ENCODE measurements at regions of chr1 and their contacts with region 1.

Region 1: DNA sequence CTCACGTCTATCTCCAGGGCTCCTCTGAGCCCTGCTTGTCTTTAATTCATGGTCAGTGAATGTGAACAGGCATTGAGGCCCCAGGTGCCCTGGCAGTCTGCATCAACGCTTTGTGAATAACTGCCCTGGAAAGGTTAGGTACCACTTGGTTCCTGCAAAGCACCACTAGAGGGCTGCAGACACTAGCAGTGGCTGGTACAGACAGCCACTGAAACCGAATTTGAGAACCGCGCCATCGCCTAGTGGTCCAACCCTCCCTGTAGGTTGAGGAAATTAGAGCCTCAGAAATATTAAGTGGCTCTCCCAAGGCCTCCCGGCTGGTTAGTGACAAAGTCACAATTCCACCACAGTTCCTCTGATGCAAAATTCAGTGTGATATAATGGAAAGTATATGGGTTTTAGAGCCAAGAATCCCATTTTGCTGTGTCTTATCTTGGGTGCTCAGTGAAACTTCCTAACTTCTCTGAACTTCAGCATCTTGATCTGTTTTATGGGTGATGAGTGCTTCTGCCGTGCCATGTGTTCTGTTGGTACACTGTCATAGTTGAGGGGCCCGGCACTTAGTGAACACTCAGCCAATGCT is 46.2 kb upstream of the BCL9 start:
- DNase-seq: peak; percentile 43
- H3K4me3 ChIP-seq: no peak overlapping the region
- H3K27ac ChIP-seq: no peak overlapping the region
- H3K27me3 ChIP-seq: peaks cover 7% of the 10 kb centered on the region
- CTCF ChIP-seq: peak; percentile 99

Region 2: DNA sequence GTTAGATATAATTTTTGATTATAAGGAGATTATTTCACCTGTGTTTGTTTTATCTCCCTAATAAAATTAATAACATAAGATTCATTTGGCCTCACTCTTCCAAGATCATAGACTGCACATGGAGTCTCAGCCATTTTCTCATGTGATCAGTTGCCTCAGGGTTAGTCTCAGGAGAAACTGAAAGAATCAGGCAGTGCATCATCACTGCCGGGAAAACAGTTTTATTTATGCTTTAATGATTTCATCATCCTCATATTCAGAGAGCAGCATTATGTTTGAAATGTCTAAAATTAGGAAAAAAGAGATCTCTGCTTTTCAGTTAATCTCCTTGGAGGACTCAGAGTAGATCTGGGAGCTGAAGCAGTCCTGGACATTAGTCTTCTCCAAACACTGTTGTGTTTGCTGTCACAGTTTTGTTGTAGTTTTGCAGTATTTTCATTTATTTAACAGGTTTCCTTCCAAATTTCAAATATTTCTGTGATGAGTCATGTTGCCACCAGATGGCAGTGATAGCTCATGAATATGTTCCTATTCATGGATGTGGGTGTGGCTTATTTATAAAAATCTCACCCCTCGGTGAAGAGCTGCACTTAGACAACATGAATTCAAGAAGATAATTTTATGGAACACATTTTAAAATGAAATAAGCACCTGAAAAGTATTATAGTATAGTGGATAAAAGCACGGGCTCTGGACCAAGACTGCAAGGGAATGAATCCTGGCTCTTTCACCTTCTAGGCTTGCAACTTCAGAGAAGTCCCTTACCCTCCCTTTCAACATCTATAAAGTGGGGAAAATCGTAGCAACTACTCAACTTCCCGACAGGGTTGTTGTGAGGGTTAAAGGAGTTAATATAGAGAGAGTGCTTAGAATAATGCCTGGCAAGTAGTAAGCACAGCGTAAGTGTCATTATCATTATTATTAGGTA is 221.4 kb before region 1 on chr1:
- CTCF ChIA-PET with region 1: interaction called, 13 read pairs
- POLR2A ChIA-PET with region 1: no interaction called
- DNase-seq: peak; percentile 65
- H3K4me3 ChIP-seq: peak overlapping the region; percentile 22
- H3K27ac ChIP-seq: peak overlapping the region; percentile 87
- H3K27me3 ChIP-seq: no peaks in the 10 kb centered on the region
- CTCF ChIP-seq: peak; percentile 44

Region 3: GRCh38 chr1:147515046-147515869 is 20.2 kb after region 1 on chr1:
- CTCF ChIA-PET with region 1: interaction called, 15 read pairs
- POLR2A ChIA-PET with region 1: no interaction called
- DNase-seq: no peak
- H3K4me3 ChIP-seq: no peak overlapping the region
- H3K27ac ChIP-seq: no peak overlapping the region
- H3K27me3 ChIP-seq: no peaks in the 10 kb centered on the region
- CTCF ChIP-seq: no peak

Region 4: GRCh38 chr1:147541672-147542568 is 46.8 kb after region 1 on chr1:
- CTCF ChIA-PET with region 1: interaction called, 11 read pairs
- POLR2A ChIA-PET with region 1: no interaction called
- DNase-seq: no peak
- H3K4me3 ChIP-seq: peak overlapping the region; percentile 66
- H3K27ac ChIP-seq: peak overlapping the region; percentile 92
- H3K27me3 ChIP-seq: no peaks in the 10 kb centered on the region
- CTCF ChIP-seq: no peak

Region 5: DNA sequence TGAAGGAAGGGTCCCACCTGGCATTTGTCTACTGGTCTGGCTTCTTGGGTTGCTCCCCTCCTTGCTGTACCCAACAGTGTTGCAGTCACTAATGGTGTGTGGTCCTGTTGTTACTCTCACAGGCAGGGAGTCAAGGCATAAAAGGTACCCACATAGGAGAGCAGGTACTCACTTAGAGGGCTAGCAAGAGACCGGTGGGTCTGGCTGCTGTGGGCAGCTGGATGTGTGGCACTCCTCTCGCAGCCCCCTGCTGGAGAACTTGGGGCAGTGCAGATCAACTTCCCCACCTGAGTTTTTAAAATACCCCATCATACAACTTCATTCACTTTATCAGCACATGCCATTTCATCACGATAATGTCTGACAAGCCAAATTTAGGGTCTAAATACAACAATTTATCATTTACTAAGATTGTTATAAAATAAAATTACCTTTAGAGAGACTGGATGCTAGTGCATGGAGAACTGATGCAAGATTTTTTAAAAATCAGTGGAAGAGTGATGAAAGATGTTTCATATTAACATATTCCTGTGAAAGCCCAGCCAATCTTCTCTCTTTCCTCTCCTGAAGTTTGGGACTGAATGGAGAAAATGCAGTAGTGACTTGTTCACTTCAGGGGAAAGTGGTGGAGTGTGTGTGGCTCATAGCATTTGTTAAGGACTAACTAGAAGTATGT is 132.5 kb after region 1 on chr1:
- CTCF ChIA-PET with region 1: interaction called, 55 read pairs
- POLR2A ChIA-PET with region 1: no interaction called
- DNase-seq: peak; percentile 26
- H3K4me3 ChIP-seq: no peak overlapping the region
- H3K27ac ChIP-seq: no peak overlapping the region
- H3K27me3 ChIP-seq: no peaks in the 10 kb centered on the region
- CTCF ChIP-seq: peak; percentile 96

Region 6: DNA sequence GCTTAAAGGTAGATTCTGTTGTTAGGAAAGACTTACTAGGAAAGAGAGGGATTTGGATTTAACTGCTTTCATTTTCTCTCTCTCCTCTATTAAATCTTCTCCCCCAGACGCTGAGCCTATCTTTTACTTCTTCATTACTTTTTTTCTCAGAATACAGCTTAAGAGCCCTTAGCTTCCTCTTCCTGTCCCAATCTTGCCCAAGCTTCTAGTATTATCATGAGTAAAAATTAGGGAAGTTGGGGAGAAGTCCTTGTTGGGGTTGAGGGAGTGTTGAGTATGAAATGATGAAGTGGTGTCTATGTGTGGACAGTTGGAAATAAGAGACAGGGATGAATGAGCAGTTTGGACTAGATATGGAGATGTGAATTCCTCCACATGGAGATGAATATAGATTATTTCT is 140.3 kb after region 1 on chr1:
- CTCF ChIA-PET with region 1: interaction called, 47 read pairs
- POLR2A ChIA-PET with region 1: no interaction called
- DNase-seq: no peak
- H3K4me3 ChIP-seq: no peak overlapping the region
- H3K27ac ChIP-seq: no peak overlapping the region
- H3K27me3 ChIP-seq: no peaks in the 10 kb centered on the region
- CTCF ChIP-seq: no peak

Region 7: DNA sequence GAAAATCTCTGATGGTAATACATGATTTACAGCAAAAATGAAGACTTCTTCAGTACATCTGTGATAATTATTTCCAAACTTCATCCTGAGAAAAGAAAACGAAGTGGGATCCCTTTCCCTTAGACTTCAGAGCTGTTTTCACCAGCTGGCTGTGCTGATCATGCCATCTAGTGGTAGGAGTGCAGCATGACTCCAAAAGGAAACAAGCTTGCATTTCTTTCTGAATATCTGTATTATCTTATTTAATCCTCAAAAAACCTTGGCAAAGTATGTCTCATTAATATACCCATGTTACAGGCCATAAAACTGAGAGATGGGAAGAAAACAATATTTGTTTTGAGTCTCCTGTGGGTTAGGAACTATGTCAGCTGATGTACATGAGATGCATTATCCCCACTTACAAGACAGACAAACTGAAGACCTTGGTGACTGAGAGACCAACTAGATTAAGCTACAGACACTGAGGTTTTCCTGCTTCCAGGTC is 397.7 kb after region 1 on chr1:
- CTCF ChIA-PET with region 1: interaction called, 19 read pairs
- POLR2A ChIA-PET with region 1: no interaction called
- DNase-seq: peak; percentile 24
- H3K4me3 ChIP-seq: no peak overlapping the region
- H3K27ac ChIP-seq: no peak overlapping the region
- H3K27me3 ChIP-seq: peaks cover 11% of the 10 kb centered on the region
- CTCF ChIP-seq: peak; percentile 99